Esophagus muscularis mucosa (tissue), 4 donors: ENCODE measurements at regions of chr11 and their contacts with region 1.

Region 1: GRCh38 chr11:14422052-14422813 is 63.2 kb upstream of the RRAS2 start:
- DNase-seq: peak; percentile 95
- H3K4me3 ChIP-seq: peak overlapping the region in 1 of 4 donors; percentile 6
- H3K27ac ChIP-seq: peak overlapping the region; percentile 51 to 71 (median 62)
- H3K4me1 ChIP-seq: peaks cover 39 to 48% (median 46%) of the 10 kb centered on the region in 4 donors
- H3K27me3 ChIP-seq: no peaks in the 10 kb centered on the region
- CTCF ChIP-seq: no peak
- EP300 ChIP-seq: no peak
- POLR2A ChIP-seq: no peak

Region 2: DNA sequence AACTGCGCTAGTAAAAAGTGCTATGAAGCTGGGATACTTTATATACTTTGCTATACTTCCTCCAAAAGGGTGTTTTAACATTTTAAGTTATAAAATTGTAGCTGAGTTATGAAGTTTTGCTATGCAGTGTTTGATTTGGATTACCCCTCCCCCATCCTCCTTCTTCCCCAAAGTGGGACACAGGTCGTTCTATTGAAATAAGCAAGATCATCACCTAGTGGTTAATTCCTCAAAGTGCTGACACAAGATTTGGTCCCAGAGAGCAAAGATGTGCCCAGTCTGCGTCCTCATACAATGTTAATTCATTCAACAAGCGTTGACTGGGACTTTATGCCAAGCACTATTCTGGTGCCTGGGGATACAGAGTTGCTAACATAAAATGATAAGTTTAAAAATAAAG is 381.2 kb before region 1 on chr11:
- intact Hi-C with region 1: no loop called
- DNase-seq: no peak
- H3K4me3 ChIP-seq: no peak overlapping the region
- H3K27ac ChIP-seq: no peak overlapping the region
- H3K4me1 ChIP-seq: peaks cover 0 to 22% (median 16%) of the 10 kb centered on the region in 4 donors
- H3K27me3 ChIP-seq: no peaks in the 10 kb centered on the region
- CTCF ChIP-seq: peak in 2 of 3 experiments; percentile 33 to 36
- EP300 ChIP-seq: no peak
- POLR2A ChIP-seq: no peak

Region 3: DNA sequence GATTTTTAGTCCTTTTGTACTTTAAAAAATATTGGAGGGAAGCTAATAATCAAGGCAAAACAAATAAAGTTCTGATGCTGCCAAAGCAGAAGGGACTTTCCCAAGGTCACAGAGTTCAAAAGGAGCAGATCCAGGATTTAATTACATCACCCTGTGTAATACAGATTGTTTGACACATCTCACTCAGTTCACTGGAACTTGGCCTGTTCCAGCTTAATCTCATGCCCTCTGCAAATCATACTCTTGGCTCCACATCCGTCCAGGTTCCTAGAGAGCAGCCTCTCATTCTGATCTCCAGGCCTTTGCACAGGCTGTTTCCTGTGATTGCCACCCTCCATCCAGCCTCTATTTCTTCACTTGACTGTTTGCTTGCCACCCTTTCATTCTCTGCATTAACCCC is 308.0 kb before region 1 on chr11:
- intact Hi-C with region 1: no loop called
- DNase-seq: no peak
- H3K4me3 ChIP-seq: no peak overlapping the region
- H3K27ac ChIP-seq: no peak overlapping the region
- H3K4me1 ChIP-seq: peaks cover 0 to 16% (median 11%) of the 10 kb centered on the region in 4 donors
- H3K27me3 ChIP-seq: no peaks in the 10 kb centered on the region
- CTCF ChIP-seq: no peak
- EP300 ChIP-seq: no peak
- POLR2A ChIP-seq: no peak

Region 4: GRCh38 chr11:14249121-14249963 is 172.9 kb before region 1 on chr11:
- intact Hi-C with region 1: no loop called
- DNase-seq: no peak
- H3K4me3 ChIP-seq: no peak overlapping the region
- H3K27ac ChIP-seq: no peak overlapping the region
- H3K4me1 ChIP-seq: peaks cover 0 to 7% (median 0%) of the 10 kb centered on the region in 4 donors
- H3K27me3 ChIP-seq: peaks cover 0 to 10% (median 0%) of the 10 kb centered on the region in 4 donors
- CTCF ChIP-seq: peak; percentile 78 to 87 (median 85)
- EP300 ChIP-seq: no peak
- POLR2A ChIP-seq: no peak

Region 5: GRCh38 chr11:14380947-14381561 is 41.2 kb before region 1 on chr11:
- intact Hi-C with region 1: loop called (anchors 5 kb)
- DNase-seq: no peak
- H3K4me3 ChIP-seq: peak overlapping the region; percentile 56 to 65 (median 58)
- H3K27ac ChIP-seq: peak overlapping the region; percentile 78 to 83 (median 78)
- H3K4me1 ChIP-seq: peaks cover 13 to 26% (median 23%) of the 10 kb centered on the region in 4 donors
- H3K27me3 ChIP-seq: no peaks in the 10 kb centered on the region
- CTCF ChIP-seq: peak in 1 of 3 experiments; percentile 15
- EP300 ChIP-seq: no peak
- POLR2A ChIP-seq: no peak

Region 6: GRCh38 chr11:14537134-14537599 is 114.9 kb after region 1 on chr11:
- intact Hi-C with region 1: no loop called
- DNase-seq: no peak
- H3K4me3 ChIP-seq: no peak overlapping the region
- H3K27ac ChIP-seq: peak overlapping the region in 1 of 4 donors; percentile 5
- H3K4me1 ChIP-seq: peaks cover 17 to 52% (median 46%) of the 10 kb centered on the region in 4 donors
- H3K27me3 ChIP-seq: no peaks in the 10 kb centered on the region
- CTCF ChIP-seq: peak; percentile 78 to 89 (median 79)
- EP300 ChIP-seq: no peak
- POLR2A ChIP-seq: no peak